Adrenal gland (tissue), 19 donors: ENCODE measurements at regions of chr10 and their contacts with region 1.

Region 1: DNA sequence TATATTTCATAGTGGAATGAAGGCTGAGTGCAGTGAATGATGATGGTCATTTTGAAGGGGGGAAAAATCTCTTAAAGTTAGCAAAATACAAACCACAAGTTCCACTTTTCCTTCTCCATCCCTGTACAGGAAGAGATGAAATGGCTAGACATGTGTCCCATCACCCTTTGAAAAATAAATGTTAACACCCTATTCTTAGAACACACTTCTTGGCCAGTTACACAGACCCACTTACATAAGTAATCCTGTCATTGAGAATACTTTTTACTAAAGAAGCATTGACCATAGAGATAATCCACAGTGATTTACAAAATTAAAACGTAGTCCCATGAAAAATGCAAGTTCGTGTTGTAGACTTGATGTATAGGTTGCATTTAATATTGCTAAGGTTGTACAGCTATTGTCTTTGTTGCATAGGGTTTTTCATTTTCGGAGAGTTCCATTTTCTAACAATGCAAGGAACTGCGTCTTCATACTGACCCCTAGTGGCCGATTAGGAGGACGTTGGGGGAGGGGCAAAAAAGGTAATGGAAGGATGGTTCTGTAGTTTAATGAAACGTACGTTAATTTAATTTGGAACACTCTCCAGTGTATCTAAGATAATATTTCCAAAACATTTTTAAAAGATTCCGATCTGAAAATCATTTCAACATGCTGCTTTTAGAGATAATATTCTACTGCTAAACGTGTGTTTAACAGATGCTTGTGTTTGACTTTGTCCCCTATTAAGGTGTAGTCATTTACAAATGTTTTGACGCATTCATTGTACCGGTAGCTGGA is 60.9 kb downstream of the ARMC3 start:
- DNase-seq: peak; percentile 43 to 81 (median 56)
- H3K4me3 ChIP-seq: no peak overlapping the region
- H3K27ac ChIP-seq: no peak overlapping the region
- H3K4me1 ChIP-seq: peaks cover 0 to 3% of the 10 kb centered on the region in 2 donors
- H3K27me3 ChIP-seq: no peaks in the 10 kb centered on the region
- CTCF ChIP-seq: peak; percentile 90 to 98 (median 92)
- POLR2A ChIP-seq: no peak

Region 2: GRCh38 chr10:22010973-22011408 is 977.8 kb before region 1 on chr10:
- intact Hi-C with region 1: loop called (anchors 5 to 10 kb)
- DNase-seq: no peak
- H3K4me3 ChIP-seq: no peak overlapping the region
- H3K27ac ChIP-seq: no peak overlapping the region
- H3K4me1 ChIP-seq: peaks cover 0 to 2% of the 10 kb centered on the region in 2 donors
- H3K27me3 ChIP-seq: no peaks in the 10 kb centered on the region
- CTCF ChIP-seq: peak; percentile 18 to 74 (median 55)
- POLR2A ChIP-seq: no peak

Region 3: GRCh38 chr10:22436884-22437619 is 551.7 kb before region 1 on chr10:
- intact Hi-C with region 1: loop called in 1 of 2 experiments (anchors 10 kb)
- DNase-seq: peak; percentile 83 to 95 (median 86)
- H3K4me3 ChIP-seq: peak overlapping the region; percentile 31 to 79 (median 67)
- H3K27ac ChIP-seq: peak overlapping the region; percentile 89 to 98 (median 90)
- H3K4me1 ChIP-seq: peaks cover 11 to 13% of the 10 kb centered on the region in 2 donors
- H3K27me3 ChIP-seq: no peaks in the 10 kb centered on the region
- CTCF ChIP-seq: peak in 1 of 6 experiments; percentile 9
- POLR2A ChIP-seq: peak; percentile 86 to 92

Region 4: DNA sequence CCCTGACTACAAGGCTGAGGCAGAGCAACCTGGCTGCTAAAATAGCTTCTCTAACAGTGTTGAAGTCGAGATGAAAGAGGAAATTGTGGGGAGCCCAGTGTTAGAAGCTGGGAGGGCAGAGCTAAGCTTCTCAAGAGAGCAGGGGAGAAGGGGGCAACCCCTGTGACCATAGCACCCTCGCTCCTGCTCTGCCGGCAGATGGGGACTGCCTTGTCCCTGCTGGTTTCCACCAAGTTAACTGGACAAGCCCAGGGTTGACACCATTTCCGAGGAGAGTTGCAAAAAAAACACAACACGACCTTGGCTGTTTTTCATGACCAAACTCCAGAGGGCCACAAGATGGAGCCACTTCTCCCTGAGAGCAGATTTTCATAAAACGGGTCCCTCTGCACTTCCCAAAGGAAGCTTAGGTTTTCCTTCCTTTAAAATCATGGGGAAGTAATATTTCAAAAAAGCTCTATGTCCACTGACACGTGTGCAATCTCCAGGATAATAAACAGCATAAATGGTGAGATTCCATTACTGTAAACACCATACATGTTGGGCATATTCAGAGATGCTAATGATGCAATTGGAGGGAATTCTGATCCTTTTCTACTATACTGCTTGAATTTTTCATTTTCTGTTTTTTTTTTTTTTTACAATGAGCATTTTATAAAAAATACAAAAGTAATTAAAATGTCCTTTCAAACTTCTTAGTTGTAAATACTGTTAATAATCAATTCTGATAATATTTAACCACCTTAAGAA is 414.8 kb before region 1 on chr10:
- intact Hi-C with region 1: loop called (anchors 10 kb)
- DNase-seq: peak in 3 of 7 donors; percentile 27 to 41 (median 30)
- H3K4me3 ChIP-seq: no peak overlapping the region
- H3K27ac ChIP-seq: no peak overlapping the region
- H3K4me1 ChIP-seq: no peaks in the 10 kb centered on the region
- H3K27me3 ChIP-seq: no peaks in the 10 kb centered on the region
- CTCF ChIP-seq: peak in 5 of 6 experiments; percentile 41 to 60 (median 58)
- POLR2A ChIP-seq: no peak

Region 5: GRCh38 chr10:22714479-22715289 is 274.1 kb before region 1 on chr10 and contains the start of gene PIP4K2A:
- intact Hi-C with region 1: loop called in 1 of 2 experiments (anchors 10 kb)
- DNase-seq: peak; percentile 62 to 79 (median 73)
- H3K4me3 ChIP-seq: peak within 1 kb of the TSS; percentile 46 to 89 (median 56)
- H3K27ac ChIP-seq: peak within 1 kb of the TSS in 4 of 5 donors; percentile 83 to 95 (median 86)
- H3K4me1 ChIP-seq: peaks cover 14 to 35% of the 10 kb centered on the region in 2 donors
- H3K27me3 ChIP-seq: no peaks in the 10 kb centered on the region
- CTCF ChIP-seq: no peak
- POLR2A ChIP-seq: peak; percentile 69 to 74
- total RNA-seq, gene PIP4K2A: 23.8 to 70.6 (median 29.3) TPM

Region 6: GRCh38 chr10:23120001-23120934 is 131.5 kb after region 1 on chr10:
- intact Hi-C with region 1: no loop called
- DNase-seq: no peak
- H3K4me3 ChIP-seq: no peak overlapping the region
- H3K27ac ChIP-seq: no peak overlapping the region
- H3K4me1 ChIP-seq: no peaks in the 10 kb centered on the region
- H3K27me3 ChIP-seq: no peaks in the 10 kb centered on the region
- CTCF ChIP-seq: no peak
- POLR2A ChIP-seq: no peak

Region 7: DNA sequence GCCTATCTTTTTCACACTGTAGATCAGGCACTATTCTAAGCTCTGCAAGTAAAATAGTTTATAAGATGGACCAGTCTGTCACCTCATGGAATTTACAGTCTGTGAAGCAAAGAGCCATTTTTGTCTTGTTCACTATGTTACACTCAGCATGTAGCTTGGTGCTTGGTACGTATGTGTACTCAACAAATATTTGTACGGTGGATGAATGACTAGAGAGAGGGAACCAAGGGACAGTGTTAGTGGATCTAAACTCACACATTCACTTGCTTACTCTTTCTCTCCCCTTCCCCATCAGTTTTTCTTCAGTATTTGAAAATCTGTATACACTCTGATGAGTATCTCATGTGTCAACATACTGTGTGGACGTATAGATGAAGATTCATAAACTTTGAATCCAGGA is 249.2 kb after region 1 on chr10:
- intact Hi-C with region 1: no loop called
- DNase-seq: no peak
- H3K4me3 ChIP-seq: no peak overlapping the region
- H3K27ac ChIP-seq: no peak overlapping the region
- H3K4me1 ChIP-seq: no peaks in the 10 kb centered on the region
- H3K27me3 ChIP-seq: no peaks in the 10 kb centered on the region
- CTCF ChIP-seq: no peak
- POLR2A ChIP-seq: no peak